ENCODE measurements at regions of chr17 and their contacts with region 1.

Region 1: GRCh38 chr17:73192894-73193701 is at the start of gene COG1:
- DNase-seq: peak; percentile 59 to 82
- ATAC-seq: peak; percentile 83 to 85
- H3K4me3 ChIP-seq: peak within 1 kb of the TSS; percentile 55 to 100 (median 86)
- H3K27ac ChIP-seq: peak within 1 kb of the TSS; percentile 92 to 97 (median 95)
- H3K4me1 ChIP-seq: peaks cover 13 to 17% of the 10 kb centered on the region in 2 donors
- H3K27me3 ChIP-seq: no peaks in the 10 kb centered on the region
- CTCF ChIP-seq: no peak
- POLR2A ChIP-seq: peak in 1 of 2 donors; percentile 14
- total RNA-seq, gene COG1: 21.2 to 34.7 (median 26.7) TPM

Region 2: GRCh38 chr17:73231841-73232586 is 38.9 kb after region 1 on chr17:
- in situ Hi-C with region 1: loop called in 1 of 4 experiments (anchors 5 kb)
- intact Hi-C with region 1: loop called (anchors 1 kb)
- DNase-seq: peak; percentile 94
- ATAC-seq: peak; percentile 84 to 86
- H3K4me3 ChIP-seq: peak overlapping the region; percentile 89 to 99 (median 96)
- H3K27ac ChIP-seq: peak overlapping the region; percentile 92 to 97 (median 95)
- H3K4me1 ChIP-seq: peaks cover 44 to 51% of the 10 kb centered on the region in 2 donors
- H3K27me3 ChIP-seq: no peaks in the 10 kb centered on the region
- CTCF ChIP-seq: peak in 4 of 5 experiments; percentile 43 to 63 (median 58)
- POLR2A ChIP-seq: peak; percentile 90 to 91

Region 3: DNA sequence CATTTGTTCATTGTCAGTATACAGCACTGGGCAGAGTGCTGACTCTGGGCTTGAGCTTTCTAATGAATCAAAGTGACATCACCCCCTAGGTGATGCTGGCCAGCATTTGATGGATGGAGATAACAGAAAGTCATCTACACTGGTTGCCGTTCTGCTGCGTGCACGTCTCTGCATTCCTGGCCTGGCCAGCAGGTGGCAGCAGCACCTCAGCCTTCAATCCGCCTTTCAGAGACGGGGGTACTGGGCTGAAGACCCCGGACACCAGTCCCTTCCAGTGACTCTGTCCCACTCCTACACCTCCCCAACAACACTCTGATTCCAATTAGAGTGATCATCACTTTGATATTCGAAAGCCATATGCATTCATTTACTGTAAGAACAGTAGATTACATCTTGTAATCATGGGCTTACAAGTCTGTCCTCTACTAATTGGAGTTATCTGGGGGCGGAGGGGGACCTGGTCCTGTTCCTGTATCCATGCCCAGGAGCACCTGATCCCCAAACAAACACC is 62.6 kb after region 1 on chr17:
- in situ Hi-C with region 1: no loop called
- intact Hi-C with region 1: no loop called
- DNase-seq: peak in 1 of 2 donors; percentile 15
- ATAC-seq: peak; percentile 60 to 75
- H3K4me3 ChIP-seq: no peak overlapping the region
- H3K27ac ChIP-seq: no peak overlapping the region
- H3K4me1 ChIP-seq: no peaks in the 10 kb centered on the region
- H3K27me3 ChIP-seq: no peaks in the 10 kb centered on the region
- CTCF ChIP-seq: peak; percentile 95 to 98 (median 97)
- POLR2A ChIP-seq: no peak

Measured in gastrocnemius medialis (tissue), 4 donors.